Left ventricle myocardium superior (tissue), 1 donor: ENCODE measurements at regions of chr4 and their contacts with region 1.

Region 1: GRCh38 chr4:120156120-120156718 is 89.6 kb upstream of the MAD2L1 start:
- DNase-seq: no peak
- ATAC-seq: no peak

Region 2: GRCh38 chr4:120000591-120001296 is 155.5 kb before region 1 on chr4:
- intact Hi-C with region 1: no loop called
- DNase-seq: no peak
- ATAC-seq: no peak

Region 3: GRCh38 chr4:120709991-120710390 is 553.8 kb after region 1 on chr4:
- intact Hi-C with region 1: no loop called
- DNase-seq: no peak
- ATAC-seq: peak; percentile 62

Region 4: DNA sequence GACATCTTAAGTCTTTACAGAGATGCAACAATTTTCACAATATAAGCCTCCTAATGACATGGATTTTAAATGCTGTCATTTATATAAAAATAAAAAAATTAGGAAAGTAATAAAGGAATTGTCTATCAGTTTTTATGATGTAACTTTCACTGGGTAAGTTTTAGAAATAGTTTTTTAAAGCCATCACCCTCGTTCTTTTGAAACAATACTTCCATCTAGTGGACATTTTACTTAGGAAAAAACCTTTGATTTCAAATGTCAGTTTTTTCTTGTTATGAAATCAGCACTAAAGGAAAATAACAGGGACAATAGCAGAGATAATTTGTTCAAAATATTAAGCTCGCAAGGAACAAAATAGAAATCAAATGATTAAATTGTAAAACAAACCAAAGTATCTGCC is 940.4 kb after region 1 on chr4:
- intact Hi-C with region 1: loop called (anchors 2 kb)
- DNase-seq: no peak
- ATAC-seq: no peak

Region 5: GRCh38 chr4:121252224-121252806 is 1096.1 kb after region 1 on chr4:
- intact Hi-C with region 1: loop called (anchors 10 kb)
- DNase-seq: peak; percentile 64
- ATAC-seq: peak; percentile 69